Motor neuron (in vitro differentiated cells): ENCODE measurements at regions of chr18 and their contacts with region 1.

Region 1: GRCh38 chr18:51029694-51030536 is at the start of gene SMAD4:
- ATAC-seq: peak; percentile 79 to 92 (median 90)
- H3K4me3 ChIP-seq: peak within 1 kb of the TSS; percentile 71 to 97 (median 91)
- H3K27ac ChIP-seq: peak within 1 kb of the TSS; percentile 96 to 99
- H3K4me1 ChIP-seq: peaks cover 14 to 16% of the 10 kb centered on the region in 2 donors
- total RNA-seq, gene SMAD4: 29.6 to 72.7 (median 50.5) TPM

Region 2: DNA sequence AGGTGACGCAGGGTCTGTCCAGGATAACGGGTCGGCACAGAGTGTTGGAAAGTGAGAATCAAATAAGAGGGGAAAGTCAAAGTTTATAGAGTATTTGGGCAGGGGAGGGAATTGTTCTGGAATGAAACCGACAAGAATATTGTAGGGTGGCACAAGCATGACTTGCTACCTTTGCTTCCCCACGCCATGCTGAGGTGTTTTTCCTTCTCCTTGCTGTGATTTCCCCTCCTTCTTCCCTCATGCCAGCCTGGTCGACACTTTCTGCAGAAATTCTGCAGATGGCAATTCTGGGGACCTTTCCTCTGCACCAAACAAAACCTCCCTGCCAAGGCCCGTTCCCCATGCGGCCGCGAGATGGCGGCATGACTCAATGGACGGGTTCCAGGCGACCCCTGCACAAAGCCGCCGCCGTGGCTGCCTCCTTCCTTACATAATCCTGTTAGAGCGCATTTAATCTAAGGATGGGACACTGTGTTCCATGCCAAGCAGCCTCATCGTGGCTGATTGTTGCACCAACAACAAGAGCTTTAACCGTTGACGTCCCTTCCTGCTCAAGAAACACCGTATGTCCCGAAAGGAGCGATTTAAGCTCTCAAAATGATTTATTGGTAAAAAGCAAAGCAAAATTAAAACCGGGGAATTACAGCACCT is 210.1 kb before region 1 on chr18 and contains the start of gene MRO:
- in situ Hi-C with region 1: loop called in 3 of 9 experiments (anchors 25 kb)
- ATAC-seq: peak; percentile 70 to 100 (median 99)
- H3K4me3 ChIP-seq: peak within 1 kb of the TSS in 4 of 5 donors; percentile 7 to 16 (median 12)
- H3K27ac ChIP-seq: no peak within 1 kb of the TSS
- H3K4me1 ChIP-seq: peaks cover 8 to 10% of the 10 kb centered on the region in 2 donors
- total RNA-seq, gene MRO: 0.09 to 1.00 (median 0.28) TPM

Region 3: GRCh38 chr18:50836521-50836957 is 193.4 kb before region 1 on chr18:
- in situ Hi-C with region 1: loop called in 2 of 9 experiments (anchors 25 kb)
- ATAC-seq: peak in 2 of 8 experiments; percentile 28 to 31
- H3K4me3 ChIP-seq: no peak overlapping the region
- H3K27ac ChIP-seq: no peak overlapping the region
- H3K4me1 ChIP-seq: no peaks in the 10 kb centered on the region